Activated B cell treated with CpG ODN at 0.5 μM for 24 hours (primary cell): ENCODE measurements at regions of chr15 and their contacts with region 1.

Region 1: GRCh38 chr15:89087830-89088604 is at the start of gene ABHD2:
- DNase-seq: peak; percentile 98
- ATAC-seq: peak; percentile 97
- H3K4me3 Mint-ChIP-seq: no peak within 1 kb of the TSS
- H3K27ac Mint-ChIP-seq: no peak within 1 kb of the TSS
- H3K4me1 Mint-ChIP-seq: peaks cover 33% of the 10 kb centered on the region
- H3K27me3 Mint-ChIP-seq: no peaks in the 10 kb centered on the region
- CTCF ChIP-seq: no peak
- total RNA-seq, gene ABHD2: 40.7 and 48.8 TPM in 2 replicates

Region 2: DNA sequence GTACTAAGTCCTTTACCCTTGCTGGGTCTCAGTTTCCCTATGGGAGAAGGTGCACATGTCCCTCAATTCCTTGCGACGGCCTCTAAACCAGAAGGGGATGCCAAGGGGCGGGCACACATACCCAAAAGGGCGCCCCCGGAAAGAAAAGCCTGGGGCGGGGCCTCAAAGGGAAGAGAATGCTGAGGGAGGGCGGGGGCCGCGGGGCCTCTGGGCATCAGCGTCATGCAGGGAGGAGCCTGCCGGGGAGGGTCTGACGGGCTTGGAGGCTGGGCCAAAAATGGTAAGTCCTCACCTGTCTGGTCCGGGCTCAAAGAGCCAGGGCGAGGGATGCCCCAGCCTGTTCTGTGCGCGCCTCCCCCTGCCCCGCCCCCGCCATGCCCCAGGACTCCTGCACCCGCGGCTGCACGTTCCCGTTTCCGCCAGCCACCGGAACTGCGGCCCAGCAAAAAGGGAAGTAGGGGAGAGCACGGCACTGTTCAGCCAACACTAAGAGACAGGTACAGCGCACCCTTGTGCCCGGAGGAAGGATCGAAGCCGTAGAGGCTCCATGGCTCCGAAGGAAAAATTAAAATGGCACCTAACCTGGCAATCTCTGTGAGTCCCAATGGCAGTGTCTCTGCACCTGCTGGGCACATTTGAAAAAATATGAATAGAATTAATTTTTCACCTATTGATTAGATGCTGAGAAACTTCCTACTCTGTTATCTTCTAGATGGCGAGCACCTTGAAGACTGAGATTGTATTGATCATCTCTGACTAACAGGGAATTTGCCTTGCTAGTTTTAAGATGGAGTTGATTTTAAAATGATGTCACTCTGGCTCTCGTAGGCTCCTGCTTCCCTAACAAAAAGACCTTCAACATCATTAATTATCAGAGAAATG is 541.5 kb before region 1 on chr15 and contains the start of gene DET1:
- CTCF ChIA-PET with region 1: no interaction called
- POLR2A ChIA-PET with region 1: no interaction called
- intact Hi-C with region 1: loop called (anchors 1 kb)
- DNase-seq: peak; percentile 88
- ATAC-seq: peak; percentile 94
- H3K4me3 Mint-ChIP-seq: peak within 1 kb of the TSS; percentile 92
- H3K27ac Mint-ChIP-seq: peak within 1 kb of the TSS; percentile 94
- H3K4me1 Mint-ChIP-seq: peaks cover 14% of the 10 kb centered on the region
- H3K27me3 Mint-ChIP-seq: no peaks in the 10 kb centered on the region
- CTCF ChIP-seq: no peak
- total RNA-seq, gene DET1: 5.7 and 7.1 TPM in 2 replicates

Region 3: GRCh38 chr15:88913017-88913849 is 174.8 kb before region 1 on chr15 and contains the start of gene MFGE8:
- CTCF ChIA-PET with region 1: no interaction called
- POLR2A ChIA-PET with region 1: no interaction called
- intact Hi-C with region 1: loop called (anchors 1 kb)
- DNase-seq: peak; percentile 66
- ATAC-seq: peak; percentile 87
- H3K4me3 Mint-ChIP-seq: peak within 1 kb of the TSS; percentile 90
- H3K27ac Mint-ChIP-seq: no peak within 1 kb of the TSS
- H3K4me1 Mint-ChIP-seq: peaks cover 21% of the 10 kb centered on the region
- H3K27me3 Mint-ChIP-seq: peaks cover 7% of the 10 kb centered on the region
- CTCF ChIP-seq: no peak
- total RNA-seq, gene MFGE8: 2.4 and 3.5 TPM in 2 replicates

Region 4: DNA sequence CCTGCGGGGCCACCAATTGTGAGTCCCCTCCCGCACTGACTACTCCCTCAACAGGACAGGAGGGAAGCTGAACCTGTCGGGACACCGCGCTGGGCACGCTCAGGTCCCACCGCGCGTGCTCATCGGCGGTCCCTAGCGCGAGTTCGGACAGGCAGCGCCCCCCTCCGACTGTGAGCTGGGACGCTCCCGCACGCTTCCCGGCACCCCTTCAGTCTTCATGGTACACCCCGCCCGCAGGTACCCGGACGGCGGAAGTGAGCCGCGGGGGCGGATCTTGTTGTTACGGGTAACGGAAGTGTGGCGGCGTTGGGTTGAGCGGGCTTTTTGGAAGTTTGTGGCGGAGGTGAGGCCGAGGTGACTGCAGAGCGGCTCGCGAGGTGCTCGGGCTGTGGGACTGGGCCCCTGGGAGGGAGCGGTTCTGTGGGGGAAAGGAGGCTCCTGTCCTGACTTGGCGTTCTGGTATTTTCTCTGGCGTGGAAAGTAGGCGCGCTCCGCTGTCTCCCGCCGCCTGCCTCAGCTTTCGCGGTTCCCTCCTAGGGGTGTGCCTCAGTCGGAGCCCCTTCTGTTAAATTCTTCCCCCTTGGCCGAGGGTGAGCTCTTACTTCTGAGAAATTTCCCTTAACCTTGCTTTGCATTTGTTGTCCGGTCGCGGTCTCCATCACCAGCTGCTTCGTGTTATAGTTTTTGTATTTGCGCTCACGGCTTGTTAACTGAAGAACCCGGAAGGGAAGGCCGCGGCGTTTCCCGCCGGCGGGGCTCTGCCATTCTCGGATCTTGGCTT is 155.9 kb after region 1 on chr15 and contains the start of gene FANCI:
- CTCF ChIA-PET with region 1: no interaction called
- POLR2A ChIA-PET with region 1: no interaction called
- intact Hi-C with region 1: loop called (anchors 1 kb)
- DNase-seq: peak; percentile 94
- ATAC-seq: peak; percentile 97
- H3K4me3 Mint-ChIP-seq: peak within 1 kb of the TSS; percentile 90
- H3K27ac Mint-ChIP-seq: peak within 1 kb of the TSS; percentile 75
- H3K4me1 Mint-ChIP-seq: peaks cover 29% of the 10 kb centered on the region
- H3K27me3 Mint-ChIP-seq: no peaks in the 10 kb centered on the region
- CTCF ChIP-seq: no peak
- total RNA-seq, gene FANCI: 13.8 and 16.6 TPM in 2 replicates